K562 (cell line): ENCODE measurements at regions of chr2 and their contacts with region 1.

Region 1: DNA sequence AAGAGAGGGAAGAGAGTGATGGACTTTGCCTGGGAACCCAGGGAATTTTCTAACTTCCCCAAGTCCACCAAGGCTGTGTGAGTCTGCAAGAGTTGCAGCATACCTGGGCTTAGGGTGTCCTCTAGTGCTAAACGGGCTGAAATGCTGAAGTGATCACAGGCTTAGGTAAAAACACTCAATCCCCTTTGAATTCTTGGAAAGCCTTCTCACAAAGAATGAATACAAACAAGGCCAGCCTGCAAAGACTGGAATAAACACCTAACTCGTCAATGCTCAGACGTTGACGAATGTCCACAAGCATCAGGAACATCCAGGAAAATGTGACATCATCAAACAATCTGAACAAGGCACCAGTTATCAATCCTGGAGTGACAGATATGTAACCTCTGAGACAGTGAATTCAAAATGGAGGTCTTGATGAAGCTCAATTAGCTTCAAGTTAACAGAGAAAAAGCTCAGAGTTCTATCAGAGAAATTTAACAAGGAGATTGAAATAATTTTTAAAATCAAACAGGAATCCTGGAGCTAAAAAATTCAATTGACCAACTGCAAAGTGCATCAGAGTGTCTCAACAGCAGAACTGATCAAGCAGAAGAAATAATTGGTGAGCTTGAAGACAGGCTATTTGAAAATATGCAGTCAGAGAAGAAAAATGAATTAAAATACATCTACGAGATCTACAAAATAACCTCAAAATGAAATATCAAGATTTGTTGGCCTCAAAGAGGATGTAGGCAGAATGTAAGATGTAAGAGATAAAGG is 30.2 kb upstream of the BMP10 start:
- DNase-seq: no peak
- ATAC-seq: no peak
- H3K4me3 ChIP-seq: no peak overlapping the region
- H3K27ac ChIP-seq: no peak overlapping the region
- H3K4me1 ChIP-seq: no peaks in the 10 kb centered on the region
- H3K27me3 ChIP-seq: 0 out of 5 replicates have a peak, but pooled peaks cover 0 to 2% of the 10 kb centered on the region in 2 experiments
- CTCF ChIP-seq: peak in 2 of 3 experiments; percentile 18 to 26; a peak in 2 of 6 replicates
- EP300 ChIP-seq: no peak
- POLR2A ChIP-seq: no peak
- RAD21 ChIP-seq: peak in 1 of 2 experiments; percentile 67; a peak in 2 of 4 replicates

Region 2: DNA sequence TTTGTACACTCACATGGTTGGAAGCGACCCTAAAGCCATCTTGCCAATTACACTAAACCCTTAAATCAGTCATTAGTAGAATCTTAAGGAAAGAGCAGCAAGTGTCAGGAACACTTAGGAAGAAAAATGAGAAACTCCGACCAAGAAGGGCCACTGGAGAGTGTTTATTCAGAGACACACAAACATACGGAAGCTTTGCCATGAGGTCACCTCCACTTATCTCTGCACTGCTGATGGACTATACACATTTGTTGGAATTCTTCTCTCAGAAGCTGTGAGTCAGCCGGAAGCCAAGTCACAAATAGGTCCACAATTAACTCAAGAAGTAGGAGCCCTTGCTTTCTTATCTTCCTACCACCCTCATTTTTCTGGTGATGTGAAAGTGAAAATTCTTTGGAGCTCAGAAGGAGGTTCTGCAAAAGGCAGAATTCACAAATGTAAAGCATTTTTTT is 51.8 kb before region 1 on chr2:
- CTCF ChIA-PET with region 1: no interaction called
- POLR2A ChIA-PET with region 1: interaction called, 3 read pairs
- in situ Hi-C with region 1: loop called (anchors 5 kb)
- intact Hi-C with region 1: no loop called
- DNase-seq: peak; percentile 45 to 91 (median 65)
- ATAC-seq: peak; percentile 93
- H3K4me3 ChIP-seq: no peak overlapping the region
- H3K27ac ChIP-seq: peak overlapping the region; percentile 91
- H3K4me1 ChIP-seq: peaks cover 0 to 44% of the 10 kb centered on the region in 2 experiments; a peak in 3 of 5 replicates
- H3K27me3 ChIP-seq: no peaks in the 10 kb centered on the region
- CTCF ChIP-seq: no peak
- EP300 ChIP-seq: peak; percentile 88
- POLR2A ChIP-seq: no peak
- RAD21 ChIP-seq: peak in 1 of 2 experiments; percentile 19; a peak in 1 of 4 replicates